ENCODE measurements at regions of chr1 and their contacts with region 1.

Region 1: DNA sequence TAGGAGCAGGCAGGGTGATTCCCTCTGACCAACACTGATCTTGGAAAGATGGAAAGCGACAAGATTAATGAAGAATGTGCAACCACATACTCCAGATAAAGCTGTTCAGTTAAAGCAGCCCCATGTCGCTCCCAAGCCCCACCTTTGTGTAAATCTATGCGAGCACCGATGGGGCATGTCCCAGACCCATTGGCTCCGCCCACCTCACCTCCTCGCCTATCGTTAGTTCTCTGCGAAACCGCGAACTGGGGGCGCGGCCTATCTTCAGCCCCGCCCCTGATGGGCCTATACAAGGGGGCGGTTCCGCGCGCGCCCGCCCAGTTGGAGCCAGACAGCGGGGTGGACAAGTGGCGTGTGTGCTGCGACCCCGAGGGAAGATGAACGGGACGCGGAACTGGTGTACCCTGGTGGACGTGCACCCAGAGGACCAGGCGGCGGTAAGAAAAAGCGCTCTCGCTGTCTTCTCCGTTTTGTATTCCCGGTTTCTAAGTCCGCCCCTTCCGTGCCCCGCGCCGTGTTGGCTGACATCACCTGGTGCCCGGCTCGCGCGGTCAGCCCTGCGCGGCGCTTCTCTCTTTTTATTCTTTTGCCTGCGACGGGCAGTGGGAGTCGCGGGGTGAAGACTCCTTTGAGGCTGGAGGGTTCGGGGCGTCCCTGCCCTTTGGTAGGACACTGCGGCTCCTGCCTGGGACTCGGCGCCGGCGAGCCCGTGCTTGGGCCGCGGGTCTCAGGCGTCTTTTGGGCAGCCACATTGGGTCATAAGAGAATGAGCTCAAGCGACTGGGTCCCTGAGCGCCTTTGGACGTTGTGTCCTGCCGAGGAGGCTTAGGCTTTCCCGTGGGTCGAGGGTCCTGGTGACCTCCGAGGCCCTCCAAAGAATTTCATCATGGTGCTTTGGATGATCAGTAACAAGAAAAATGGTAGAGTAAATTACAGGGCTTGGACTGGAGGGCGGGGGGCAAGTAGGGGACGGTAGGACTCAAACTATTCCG is at the start of gene TUFT1:
- DNase-seq: peak; percentile 93 to 98 (median 96)
- ATAC-seq: peak; percentile 87 to 94 (median 90)
- H3K4me3 ChIP-seq: peak within 1 kb of the TSS; percentile 37 to 80 (median 54)
- H3K27ac ChIP-seq: peak within 1 kb of the TSS; percentile 72 to 95 (median 84)
- H3K4me1 ChIP-seq: peaks cover 6 to 17% (median 12%) of the 10 kb centered on the region in 3 donors
- H3K27me3 ChIP-seq: no peaks in the 10 kb centered on the region
- CTCF ChIP-seq: no peak
- total RNA-seq, gene TUFT1: 8.2 to 16.1 (median 11.6) TPM

Region 2: DNA sequence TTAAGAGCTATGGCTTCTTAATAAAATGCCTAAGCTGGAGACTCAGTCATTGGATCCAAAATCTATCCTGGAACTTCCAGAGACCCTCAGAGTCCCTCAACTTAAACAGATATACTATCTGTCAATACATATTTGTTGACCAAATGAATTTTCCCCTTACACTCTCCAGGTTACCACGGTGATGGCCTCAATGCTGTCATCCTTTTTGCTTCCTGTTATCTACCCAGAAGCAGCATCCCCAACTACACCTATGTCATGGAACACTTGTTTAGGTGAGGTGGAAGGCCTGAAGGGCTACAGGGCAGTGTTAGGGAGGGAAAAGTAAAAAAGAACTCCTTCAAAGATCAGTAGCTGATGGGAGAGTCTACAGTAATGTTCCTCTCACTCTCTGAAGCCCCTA is 497.1 kb before region 1 on chr1:
- intact Hi-C with region 1: no loop called
- DNase-seq: no peak
- ATAC-seq: no peak
- H3K4me3 ChIP-seq: no peak overlapping the region
- H3K27ac ChIP-seq: no peak overlapping the region
- H3K4me1 ChIP-seq: peaks cover 0 to 3% (median 0%) of the 10 kb centered on the region in 3 donors
- H3K27me3 ChIP-seq: no peaks in the 10 kb centered on the region
- CTCF ChIP-seq: no peak

Region 3: DNA sequence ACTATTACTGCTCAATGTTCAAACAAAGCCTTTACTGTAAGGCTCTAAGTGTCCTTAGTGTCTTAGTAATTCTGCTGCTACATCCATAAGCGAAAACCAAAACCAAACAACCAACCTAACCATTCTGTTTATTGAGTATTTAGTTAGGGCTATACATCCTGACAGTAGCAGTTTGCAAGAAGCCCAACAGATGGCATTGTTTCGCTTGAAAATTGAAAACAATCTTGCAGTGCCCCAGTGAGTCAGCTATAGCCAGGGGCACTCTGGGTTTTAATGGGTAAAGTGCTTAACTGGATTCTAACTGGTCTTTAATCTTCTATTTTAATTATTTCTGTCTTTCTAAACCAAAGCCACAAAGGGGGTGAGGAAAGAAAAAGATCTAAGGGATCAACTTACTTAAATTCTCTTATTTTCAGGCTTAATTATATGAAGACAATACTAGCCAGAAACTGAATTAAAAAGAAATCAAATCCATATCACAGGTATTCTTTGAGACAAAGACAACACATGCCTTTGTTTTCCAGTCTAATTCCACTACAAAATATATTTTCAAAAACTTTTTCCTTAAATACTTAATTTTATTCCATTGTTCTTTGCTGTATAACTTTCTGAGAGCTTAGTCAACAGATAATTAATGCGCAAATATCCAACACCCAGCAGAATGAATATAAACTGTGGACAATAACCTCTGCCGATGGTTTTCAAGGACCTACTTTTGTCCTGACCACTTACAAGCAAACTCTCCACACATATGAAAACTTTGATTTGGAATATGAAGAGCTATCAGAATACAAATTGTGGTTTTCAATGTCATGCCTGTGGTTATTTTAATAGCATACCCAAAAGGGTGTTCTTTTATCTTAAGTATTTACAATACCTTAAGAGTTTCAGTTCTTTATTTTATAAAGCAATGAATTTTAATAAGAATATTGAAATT is 96.2 kb before region 1 on chr1:
- intact Hi-C with region 1: loop called in 1 of 3 experiments (anchors 10 kb)
- DNase-seq: peak in 3 of 6 donors; percentile 41 to 70 (median 43)
- ATAC-seq: peak; percentile 91 to 98 (median 96)
- H3K4me3 ChIP-seq: no peak overlapping the region
- H3K27ac ChIP-seq: no peak overlapping the region
- H3K4me1 ChIP-seq: peaks cover 0 to 9% (median 9%) of the 10 kb centered on the region in 3 donors
- H3K27me3 ChIP-seq: no peaks in the 10 kb centered on the region
- CTCF ChIP-seq: peak in 3 of 4 donors; percentile 52 to 63 (median 59)

Measured in pancreas (tissue), 10 donors.